A673 (cell line): ENCODE measurements at regions of chr6 and their contacts with region 1.

Region 1: GRCh38 chr6:112337209-112337638 is 9.9 kb upstream of the RFPL4B start:
- DNase-seq: peak; percentile 90
- H3K4me3 ChIP-seq: no peak overlapping the region
- H3K27ac ChIP-seq: no peak overlapping the region
- H3K4me1 ChIP-seq: peaks cover 16% of the 10 kb centered on the region
- H3K27me3 ChIP-seq: peaks cover 26% of the 10 kb centered on the region
- CTCF ChIP-seq: peak; percentile 89

Region 2: DNA sequence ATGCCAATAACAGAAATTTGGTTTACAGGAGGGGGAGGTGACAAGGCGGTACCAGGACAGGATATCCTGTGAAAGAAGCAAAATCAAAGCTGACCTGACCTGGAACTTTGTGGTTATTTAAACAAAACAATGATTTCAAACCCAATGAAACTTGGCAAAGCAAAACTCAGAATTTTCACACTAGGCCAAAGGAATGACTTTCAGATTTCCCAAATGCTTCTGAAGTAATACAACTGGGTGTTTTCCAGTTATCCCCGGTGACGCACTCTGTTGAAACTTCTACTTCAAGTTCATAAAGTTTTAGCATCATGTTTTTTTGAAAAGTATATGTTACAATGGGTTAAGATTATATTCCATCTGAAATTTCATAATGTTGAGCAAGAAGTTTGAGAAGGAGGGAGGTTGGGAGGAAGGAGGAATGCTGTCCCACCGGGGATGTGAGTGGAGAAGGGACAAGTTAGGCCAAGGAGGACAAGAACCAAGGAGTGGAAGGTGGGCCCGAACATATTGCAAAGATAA is 653.4 kb before region 1 on chr6:
- CTCF ChIA-PET with region 1: no interaction called
- POLR2A ChIA-PET with region 1: no interaction called
- intact Hi-C with region 1: no loop called
- DNase-seq: no peak
- H3K4me3 ChIP-seq: no peak overlapping the region
- H3K27ac ChIP-seq: no peak overlapping the region
- H3K4me1 ChIP-seq: peaks cover 9% of the 10 kb centered on the region
- H3K27me3 ChIP-seq: no peaks in the 10 kb centered on the region
- CTCF ChIP-seq: no peak

Region 3: DNA sequence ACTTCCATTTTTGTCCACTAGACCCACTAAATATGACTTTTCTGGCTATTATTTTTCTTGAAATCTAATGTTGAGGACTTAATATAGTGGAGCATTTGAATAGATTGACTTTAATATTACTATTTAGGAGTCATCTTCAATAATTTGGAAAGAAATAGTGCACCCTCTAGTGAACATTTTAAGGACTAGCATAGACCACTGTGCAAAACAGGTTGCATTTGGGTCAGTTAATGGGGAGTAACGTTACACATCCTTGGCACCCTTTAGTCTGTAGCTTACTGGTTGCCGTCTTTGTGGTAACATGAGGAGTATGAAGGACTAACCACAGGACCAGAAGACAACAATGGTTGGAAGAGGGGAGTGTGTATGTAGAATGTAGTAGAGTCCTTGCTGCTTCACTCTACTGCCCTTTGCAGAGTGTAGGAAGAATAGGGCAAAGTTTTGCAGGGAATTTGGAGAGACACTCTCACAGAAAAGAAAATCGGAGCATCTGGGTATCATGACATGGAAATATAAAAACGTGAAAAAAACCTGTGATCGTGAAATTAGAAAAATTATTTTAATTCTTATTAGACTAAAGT is 35.1 kb after region 1 on chr6:
- CTCF ChIA-PET with region 1: no interaction called
- POLR2A ChIA-PET with region 1: no interaction called
- intact Hi-C with region 1: loop called (anchors 1 kb)
- DNase-seq: peak; percentile 53
- H3K4me3 ChIP-seq: no peak overlapping the region
- H3K27ac ChIP-seq: no peak overlapping the region
- H3K4me1 ChIP-seq: no peaks in the 10 kb centered on the region
- H3K27me3 ChIP-seq: peaks cover 12% of the 10 kb centered on the region
- CTCF ChIP-seq: peak; percentile 67

Region 4: DNA sequence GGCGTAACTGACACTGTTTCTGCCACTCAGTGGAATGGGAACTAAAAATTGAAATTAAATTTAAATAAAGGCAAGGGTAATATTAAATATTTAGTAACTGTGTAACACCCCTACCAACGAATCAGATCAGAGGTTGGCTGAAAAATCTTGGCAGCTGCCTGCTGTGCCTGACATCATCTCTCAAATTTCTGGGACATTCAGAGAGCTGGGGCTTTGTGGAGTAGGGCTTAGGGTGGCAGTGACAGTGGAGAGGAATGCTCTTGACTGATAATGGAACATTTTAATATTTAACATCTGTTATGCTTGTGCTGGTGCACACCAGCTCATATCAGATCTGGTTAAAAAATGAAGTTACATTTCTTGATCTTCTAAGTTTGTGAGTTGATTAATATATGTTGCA is 72.1 kb after region 1 on chr6:
- CTCF ChIA-PET with region 1: no interaction called
- POLR2A ChIA-PET with region 1: no interaction called
- intact Hi-C with region 1: no loop called
- DNase-seq: peak; percentile 50
- H3K4me3 ChIP-seq: no peak overlapping the region
- H3K27ac ChIP-seq: no peak overlapping the region
- H3K4me1 ChIP-seq: no peaks in the 10 kb centered on the region
- H3K27me3 ChIP-seq: no peaks in the 10 kb centered on the region
- CTCF ChIP-seq: no peak

Region 5: GRCh38 chr6:112594886-112595594 is 257.8 kb after region 1 on chr6:
- CTCF ChIA-PET with region 1: no interaction called
- POLR2A ChIA-PET with region 1: no interaction called
- intact Hi-C with region 1: loop called (anchors 10 kb)
- DNase-seq: no peak
- H3K4me3 ChIP-seq: no peak overlapping the region
- H3K27ac ChIP-seq: no peak overlapping the region
- H3K4me1 ChIP-seq: peaks cover 13% of the 10 kb centered on the region
- H3K27me3 ChIP-seq: no peaks in the 10 kb centered on the region
- CTCF ChIP-seq: no peak

Region 6: DNA sequence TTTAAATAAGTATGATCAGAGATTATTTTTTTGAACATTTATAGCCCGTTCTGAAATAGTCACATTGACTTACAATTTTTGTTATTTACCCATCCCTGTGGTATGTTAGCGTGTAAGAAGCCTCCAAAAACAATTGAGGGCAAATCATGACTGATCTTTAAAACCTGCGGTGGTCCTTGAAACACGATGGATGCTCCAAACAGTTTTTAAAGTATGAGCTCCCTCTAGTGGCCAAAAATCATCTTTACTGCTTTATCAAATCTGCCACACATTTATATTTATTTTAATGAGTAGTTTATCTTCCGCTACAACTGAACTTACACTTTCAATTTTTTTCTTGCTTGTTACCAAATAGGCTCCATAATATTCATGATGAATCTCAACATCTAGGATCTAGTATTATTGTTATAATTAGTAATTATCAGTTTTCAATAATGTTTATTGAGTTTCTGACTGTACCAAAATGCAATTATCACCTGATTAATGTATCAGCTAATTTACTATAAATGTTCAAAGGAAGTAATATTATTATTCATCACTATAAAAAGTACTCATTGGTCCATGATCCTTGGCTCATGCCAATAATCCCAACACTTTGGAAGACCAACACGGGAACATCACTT is 1572.1 kb after region 1 on chr6:
- CTCF ChIA-PET with region 1: no interaction called
- POLR2A ChIA-PET with region 1: no interaction called
- intact Hi-C with region 1: loop called (anchors 10 kb)
- DNase-seq: peak; percentile 79
- H3K4me3 ChIP-seq: no peak overlapping the region
- H3K27ac ChIP-seq: no peak overlapping the region
- H3K4me1 ChIP-seq: no peaks in the 10 kb centered on the region
- H3K27me3 ChIP-seq: no peaks in the 10 kb centered on the region
- CTCF ChIP-seq: peak; percentile 73